ENCODE measurements at regions of chr6 and their contacts with region 1.

Region 1: DNA sequence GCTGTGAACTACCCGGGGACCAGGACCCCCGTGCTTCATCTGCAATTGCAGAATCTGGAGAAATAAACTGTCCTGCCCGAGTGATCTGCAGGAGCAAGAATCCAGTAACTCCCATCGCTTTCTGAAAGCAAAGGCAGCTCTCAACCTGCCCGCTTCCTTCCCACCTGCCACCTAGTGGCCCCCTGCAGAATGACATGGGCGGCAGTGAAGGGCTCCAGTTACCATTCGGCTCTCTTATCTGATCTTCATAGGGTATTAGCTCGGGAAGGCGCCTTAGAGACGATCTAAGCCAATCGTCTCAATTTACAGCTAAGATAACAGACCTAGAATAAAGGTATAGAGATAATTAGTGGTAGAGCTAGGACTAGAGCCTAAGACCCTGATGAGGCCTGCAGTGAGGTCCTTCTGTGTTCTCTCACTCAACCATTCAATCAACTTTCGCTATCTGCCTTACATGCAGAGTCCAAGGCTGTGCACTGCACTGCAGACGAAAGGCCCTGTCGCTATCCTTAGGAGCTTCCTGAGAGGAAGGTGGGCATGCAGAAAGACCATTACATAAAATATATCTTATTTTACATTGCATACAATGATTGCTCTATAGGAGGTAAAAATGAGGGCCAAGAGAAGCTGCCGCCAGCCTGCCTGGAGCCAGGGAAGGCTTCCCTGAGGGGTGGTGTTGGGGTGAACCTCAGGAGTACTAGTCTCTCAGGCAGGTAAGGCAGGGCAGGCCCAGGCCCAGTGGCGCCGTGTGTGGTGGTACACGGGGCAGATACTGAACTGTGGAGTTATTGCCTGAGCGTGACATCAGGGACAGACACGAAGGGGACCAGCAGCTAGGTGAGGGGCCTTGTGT is 7.1 kb upstream of the PSMG4 start:
- DNase-seq: peak; percentile 79 to 88
- H3K4me3 ChIP-seq: no peak overlapping the region
- H3K27ac ChIP-seq: no peak overlapping the region
- H3K4me1 ChIP-seq: peaks cover 0 to 21% (median 13%) of the 10 kb centered on the region in 4 donors
- H3K27me3 ChIP-seq: peaks cover 0 to 26% of the 10 kb centered on the region in 2 donors
- CTCF ChIP-seq: peak; percentile 96

Region 2: GRCh38 chr6:3124667-3125066 is 127.0 kb before region 1 on chr6:
- intact Hi-C with region 1: loop called (anchors 2 kb)
- DNase-seq: no peak
- H3K4me3 ChIP-seq: no peak overlapping the region
- H3K27ac ChIP-seq: no peak overlapping the region
- H3K4me1 ChIP-seq: peaks cover 0 to 1% (median under 1%) of the 10 kb centered on the region in 4 donors
- H3K27me3 ChIP-seq: no peaks in the 10 kb centered on the region
- CTCF ChIP-seq: no peak

Region 3: GRCh38 chr6:3157131-3157927 is 94.4 kb before region 1 on chr6 and contains the start of gene TUBB2A:
- intact Hi-C with region 1: loop called (anchors 10 kb)
- DNase-seq: peak; percentile 71 to 91
- H3K4me3 ChIP-seq: peak within 1 kb of the TSS; percentile 96 to 100
- H3K27ac ChIP-seq: peak within 1 kb of the TSS; percentile 97 to 100
- H3K4me1 ChIP-seq: peaks cover 0 to 11% (median 6%) of the 10 kb centered on the region in 4 donors
- H3K27me3 ChIP-seq: no peaks in the 10 kb centered on the region
- CTCF ChIP-seq: peak; percentile 47 to 48